ENCODE measurements at regions of chr11 and their contacts with region 1.

Region 1: DNA sequence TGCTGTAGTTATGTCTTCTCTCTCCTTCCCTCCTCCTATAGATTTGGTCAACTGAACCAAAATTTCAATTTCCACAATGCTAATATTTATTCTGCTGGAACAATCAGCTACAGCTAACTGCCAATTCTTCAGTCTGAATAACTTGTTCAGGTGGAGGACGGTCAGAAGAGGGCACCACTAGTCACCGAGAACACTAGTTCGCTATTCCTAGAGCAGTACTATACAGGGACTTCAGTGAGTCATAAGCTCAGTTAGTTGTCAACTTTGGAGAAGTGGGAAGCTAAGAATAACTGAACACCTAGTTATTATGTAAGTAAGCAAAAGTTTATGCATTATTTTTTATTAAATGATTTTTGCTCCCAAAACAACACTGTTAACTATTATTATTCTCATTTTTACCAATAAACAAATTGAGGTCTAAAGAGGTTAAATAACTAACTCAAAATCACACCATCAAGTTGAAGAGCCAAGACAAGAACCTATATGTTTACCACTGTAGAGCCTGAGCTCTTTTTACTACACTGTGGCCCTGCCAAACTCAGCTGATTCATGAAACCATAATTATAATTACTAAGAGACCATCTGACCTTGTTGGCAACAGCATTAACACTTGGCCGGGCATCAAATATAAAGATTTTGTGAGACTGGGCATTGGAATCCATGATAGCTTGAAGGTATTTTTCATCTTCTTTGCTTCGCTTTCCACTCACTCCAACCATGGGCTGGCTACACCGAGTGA is 59.0 kb downstream of the CEP57 start:
- DNase-seq: peak; percentile 82
- H3K4me3 ChIP-seq: no peak overlapping the region
- H3K27ac ChIP-seq: no peak overlapping the region
- H3K4me1 ChIP-seq: no peaks in the 10 kb centered on the region
- H3K27me3 ChIP-seq: no peaks in the 10 kb centered on the region
- CTCF ChIP-seq: peak; percentile 46 to 54
- POLR2A ChIP-seq: no peak

Region 2: GRCh38 chr11:95923728-95924413 is 74.6 kb after region 1 on chr11 and contains the start of gene MTMR2:
- CTCF ChIA-PET with region 1: interaction called, 18 read pairs
- POLR2A ChIA-PET with region 1: no interaction called
- dilution Hi-C with region 1: no loop called
- intact Hi-C with region 1: loop called (anchors 1 kb)
- DNase-seq: peak; percentile 82
- H3K4me3 ChIP-seq: peak within 1 kb of the TSS; percentile 92 to 99 (median 98)
- H3K27ac ChIP-seq: peak within 1 kb of the TSS; percentile 75
- H3K4me1 ChIP-seq: peaks cover 32% of the 10 kb centered on the region
- H3K27me3 ChIP-seq: no peaks in the 10 kb centered on the region
- CTCF ChIP-seq: no peak
- POLR2A ChIP-seq: peak; percentile 97
- total RNA-seq, gene MTMR2: 46.4 and 49.5 TPM in 2 replicates

Region 3: DNA sequence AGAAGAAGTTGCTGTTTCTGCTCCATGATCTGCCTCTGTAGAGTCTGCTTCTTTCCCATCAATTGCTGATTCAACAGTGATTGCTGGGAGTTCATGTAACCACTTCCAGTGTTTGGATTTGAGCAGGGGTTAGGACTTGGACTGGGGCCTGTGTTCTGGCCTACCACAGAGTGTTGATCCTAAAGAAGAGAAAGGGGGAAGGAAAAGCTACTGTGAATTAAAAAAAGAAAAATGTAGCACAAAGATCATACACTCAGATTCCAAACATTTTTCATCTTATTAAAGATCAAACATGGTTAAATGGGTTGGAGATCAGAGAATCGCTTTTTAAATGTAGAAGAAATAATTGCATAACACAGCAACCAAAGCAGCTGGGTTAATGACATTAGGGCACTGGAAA is 142.3 kb after region 1 on chr11:
- CTCF ChIA-PET with region 1: interaction called, 10 read pairs
- POLR2A ChIA-PET with region 1: no interaction called
- dilution Hi-C with region 1: no loop called
- intact Hi-C with region 1: no loop called
- DNase-seq: no peak
- H3K4me3 ChIP-seq: no peak overlapping the region
- H3K27ac ChIP-seq: no peak overlapping the region
- H3K4me1 ChIP-seq: no peaks in the 10 kb centered on the region
- H3K27me3 ChIP-seq: no peaks in the 10 kb centered on the region
- CTCF ChIP-seq: no peak
- POLR2A ChIP-seq: no peak

Region 4: DNA sequence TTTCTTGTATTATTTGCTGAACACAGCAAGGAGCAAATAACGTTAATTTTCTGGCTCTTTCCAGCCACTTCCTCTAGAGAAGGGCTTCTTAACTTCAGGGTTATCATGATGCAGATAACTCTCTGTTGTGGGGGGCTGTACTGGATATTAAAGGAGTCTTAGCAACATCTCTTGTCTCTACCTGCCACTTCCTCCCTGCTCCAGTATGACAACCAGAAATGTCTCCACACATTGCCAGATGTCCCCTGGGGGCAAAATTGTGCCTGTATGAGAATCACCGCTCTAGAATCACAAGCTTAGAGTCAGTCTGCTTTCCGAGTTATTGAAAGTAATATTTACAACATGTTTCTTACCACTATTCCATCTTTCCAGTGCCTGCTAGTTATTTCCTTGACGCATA is 547.4 kb after region 1 on chr11:
- CTCF ChIA-PET with region 1: interaction called, 82 read pairs
- POLR2A ChIA-PET with region 1: no interaction called
- dilution Hi-C with region 1: no loop called
- intact Hi-C with region 1: loop called (anchors 1 kb)
- DNase-seq: no peak
- H3K4me3 ChIP-seq: no peak overlapping the region
- H3K27ac ChIP-seq: no peak overlapping the region
- H3K4me1 ChIP-seq: no peaks in the 10 kb centered on the region
- H3K27me3 ChIP-seq: peaks cover 8 to 11% of the 10 kb centered on the region in 2 experiments
- CTCF ChIP-seq: no peak
- POLR2A ChIP-seq: no peak

Measured in endothelial cell of umbilical vein (primary cell).